ENCODE measurements at regions of chr5 and their contacts with region 1.

Region 1: DNA sequence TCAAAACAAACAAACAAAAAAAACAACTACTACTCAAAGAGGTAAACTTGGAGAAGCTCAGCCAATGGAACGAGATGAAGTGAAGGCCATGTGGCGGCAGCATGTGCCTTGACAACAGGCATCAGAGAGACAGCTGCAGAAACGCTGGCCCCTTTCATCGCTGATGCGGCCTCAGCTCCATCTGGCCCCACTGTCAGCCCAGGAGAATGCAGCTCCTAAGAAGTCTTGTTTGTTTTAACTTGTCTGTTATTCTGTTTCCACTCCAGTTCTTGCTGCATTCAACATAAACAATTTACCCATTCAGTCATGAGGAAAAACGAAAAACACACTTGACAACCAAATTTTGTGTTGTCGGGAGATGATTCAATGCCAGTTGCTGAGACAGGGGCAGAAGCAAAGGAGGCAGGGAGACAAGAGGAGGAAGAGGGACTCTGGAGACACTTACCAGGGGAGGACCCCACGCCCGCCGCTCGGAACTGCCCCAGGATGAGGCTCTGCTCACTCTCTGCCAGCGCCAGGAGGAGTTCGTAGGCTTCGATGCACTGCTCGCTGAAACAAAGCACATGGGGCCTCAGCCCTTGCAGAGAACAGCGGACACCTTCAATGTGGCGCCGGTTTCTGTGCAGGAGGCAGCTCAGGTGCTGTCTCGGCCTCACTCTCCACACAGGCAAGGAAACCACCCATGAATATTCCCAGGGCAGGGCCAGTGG is 91.2 kb downstream of the DCP2 start:
- DNase-seq: peak; percentile 94
- ATAC-seq: peak; percentile 88
- H3K4me3 ChIP-seq: no peak overlapping the region
- H3K27ac ChIP-seq: peak overlapping the region; percentile 45
- H3K4me1 ChIP-seq: peaks cover 14% of the 10 kb centered on the region
- H3K27me3 ChIP-seq: no peaks in the 10 kb centered on the region
- CTCF ChIP-seq: 0 out of 2 replicates have a peak, but pooled peaks have one; percentile 3
- POLR2A ChIP-seq: no peak
- RAD21 ChIP-seq: peak; percentile 32; the same call in 1 of the 2 replicates

Region 2: DNA sequence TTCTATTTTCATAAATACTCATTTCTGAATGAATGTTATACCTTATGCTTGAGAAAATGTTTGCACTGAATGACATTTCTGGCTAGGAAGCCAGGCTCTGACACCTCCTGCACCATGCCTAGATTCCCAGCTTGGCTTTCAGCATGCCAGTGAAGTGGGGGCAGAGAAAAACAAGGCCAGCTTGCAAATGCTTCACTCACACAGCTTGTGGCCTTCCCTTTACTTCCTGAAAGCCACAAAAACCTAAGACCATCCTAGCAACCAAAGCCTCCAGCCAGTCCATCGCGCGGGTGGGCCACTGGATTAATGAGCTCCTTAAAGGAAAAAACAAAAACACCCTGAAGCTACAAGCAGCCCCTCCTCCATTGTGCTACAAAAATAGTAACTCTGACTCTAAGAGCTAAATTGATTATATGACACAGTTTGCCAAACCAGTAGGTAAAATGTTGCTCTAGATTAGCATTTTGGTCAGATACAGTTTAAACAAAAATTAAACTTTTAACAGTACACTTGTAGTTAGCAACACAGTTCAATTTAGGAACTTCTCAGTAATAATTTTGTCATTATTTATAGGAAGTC is 207.1 kb after region 1 on chr5:
- CTCF ChIA-PET with region 1: no interaction called
- POLR2A ChIA-PET with region 1: no interaction called
- dilution Hi-C with region 1: no loop called
- in situ Hi-C with region 1: no loop called
- intact Hi-C with region 1: loop called (anchors 5 kb)
- DNase-seq: no peak
- ATAC-seq: no peak
- H3K4me3 ChIP-seq: no peak overlapping the region
- H3K27ac ChIP-seq: no peak overlapping the region
- H3K4me1 ChIP-seq: peaks cover 11% of the 10 kb centered on the region
- H3K27me3 ChIP-seq: no peaks in the 10 kb centered on the region
- CTCF ChIP-seq: no peak
- POLR2A ChIP-seq: no peak
- RAD21 ChIP-seq: no peak

Region 3: GRCh38 chr5:113519412-113519811 is 451.6 kb after region 1 on chr5:
- CTCF ChIA-PET with region 1: no interaction called
- POLR2A ChIA-PET with region 1: no interaction called
- dilution Hi-C with region 1: no loop called
- in situ Hi-C with region 1: no loop called
- intact Hi-C with region 1: loop called (anchors 1 kb)
- DNase-seq: no peak
- ATAC-seq: no peak
- H3K4me3 ChIP-seq: no peak overlapping the region
- H3K27ac ChIP-seq: no peak overlapping the region
- H3K4me1 ChIP-seq: peaks cover 8% of the 10 kb centered on the region
- H3K27me3 ChIP-seq: no peaks in the 10 kb centered on the region
- CTCF ChIP-seq: no peak
- POLR2A ChIP-seq: no peak
- RAD21 ChIP-seq: no peak

Measured in IMR-90 (cell line).